ENCODE measurements at regions of chr2 and their contacts with region 1.

Region 1: GRCh38 chr2:230614913-230615332 is 97.7 kb upstream of the CAB39 start:
- DNase-seq: peak; percentile 82
- ATAC-seq: peak; percentile 89
- H3K4me3 Mint-ChIP-seq: no peak overlapping the region
- H3K27ac Mint-ChIP-seq: peak overlapping the region; percentile 69
- H3K4me1 Mint-ChIP-seq: peaks cover 35% of the 10 kb centered on the region
- H3K27me3 Mint-ChIP-seq: no peaks in the 10 kb centered on the region

Region 2: DNA sequence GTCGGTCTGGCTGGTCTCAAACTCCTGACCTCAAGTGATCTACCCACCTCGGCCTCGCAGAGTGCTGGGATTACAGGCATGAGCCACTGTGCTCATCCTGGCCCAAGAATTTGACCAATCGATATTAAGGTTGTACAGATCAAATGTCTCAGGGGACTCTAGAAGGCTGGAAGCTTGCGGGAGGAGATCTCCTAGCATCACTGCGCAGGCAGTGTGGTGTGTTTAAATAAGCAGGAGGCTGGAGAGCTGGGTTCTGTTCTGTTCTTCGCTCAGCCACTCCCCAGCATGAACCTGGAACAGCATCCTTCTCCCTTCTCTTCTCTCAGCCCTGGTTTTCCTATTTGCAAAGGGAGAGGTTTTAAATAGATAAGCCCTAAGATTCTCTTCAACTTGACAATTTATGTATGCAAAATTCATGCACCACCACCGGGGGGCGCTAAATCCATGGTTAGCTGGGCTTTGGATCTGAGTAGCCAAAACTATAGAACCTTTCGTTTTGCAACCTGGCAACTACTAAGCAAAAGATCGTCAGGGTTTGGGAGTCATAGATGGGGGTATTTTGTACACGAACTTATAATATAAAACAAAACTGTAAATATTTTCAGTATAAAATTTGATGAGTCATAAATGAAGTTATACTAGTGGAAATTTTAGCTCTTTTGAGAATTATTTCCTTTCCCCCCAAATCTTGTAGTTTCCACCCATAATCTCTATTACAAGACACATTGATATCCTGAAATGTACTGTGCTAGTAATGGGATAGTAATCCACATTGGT is 606.8 kb before region 1 on chr2:
- CTCF ChIA-PET with region 1: interaction called, 10 read pairs
- POLR2A ChIA-PET with region 1: no interaction called
- intact Hi-C with region 1: loop called (anchors 1 kb)
- DNase-seq: peak; percentile 92
- ATAC-seq: peak; percentile 69
- H3K4me3 Mint-ChIP-seq: no peak overlapping the region
- H3K27ac Mint-ChIP-seq: no peak overlapping the region
- H3K4me1 Mint-ChIP-seq: peaks cover 5% of the 10 kb centered on the region
- H3K27me3 Mint-ChIP-seq: no peaks in the 10 kb centered on the region

Region 3: GRCh38 chr2:230219419-230220331 is 395.2 kb before region 1 on chr2 and contains the start of gene SP110:
- CTCF ChIA-PET with region 1: no interaction called
- POLR2A ChIA-PET with region 1: no interaction called
- intact Hi-C with region 1: loop called (anchors 5 kb)
- DNase-seq: peak; percentile 89
- ATAC-seq: peak; percentile 91
- H3K4me3 Mint-ChIP-seq: peak within 1 kb of the TSS; percentile 88
- H3K27ac Mint-ChIP-seq: peak within 1 kb of the TSS; percentile 97
- H3K4me1 Mint-ChIP-seq: peaks cover 66% of the 10 kb centered on the region
- H3K27me3 Mint-ChIP-seq: no peaks in the 10 kb centered on the region
- total RNA-seq, gene SP110: 96.2 to 111 TPM

Region 4: GRCh38 chr2:230472621-230473018 is 142.3 kb before region 1 on chr2:
- CTCF ChIA-PET with region 1: no interaction called
- POLR2A ChIA-PET with region 1: no interaction called
- intact Hi-C with region 1: loop called (anchors 1 to 5 kb)
- DNase-seq: peak; percentile 77
- ATAC-seq: peak; percentile 95
- H3K4me3 Mint-ChIP-seq: peak overlapping the region; percentile 17
- H3K27ac Mint-ChIP-seq: peak overlapping the region; percentile 81
- H3K4me1 Mint-ChIP-seq: peaks cover 35% of the 10 kb centered on the region
- H3K27me3 Mint-ChIP-seq: no peaks in the 10 kb centered on the region

Region 5: DNA sequence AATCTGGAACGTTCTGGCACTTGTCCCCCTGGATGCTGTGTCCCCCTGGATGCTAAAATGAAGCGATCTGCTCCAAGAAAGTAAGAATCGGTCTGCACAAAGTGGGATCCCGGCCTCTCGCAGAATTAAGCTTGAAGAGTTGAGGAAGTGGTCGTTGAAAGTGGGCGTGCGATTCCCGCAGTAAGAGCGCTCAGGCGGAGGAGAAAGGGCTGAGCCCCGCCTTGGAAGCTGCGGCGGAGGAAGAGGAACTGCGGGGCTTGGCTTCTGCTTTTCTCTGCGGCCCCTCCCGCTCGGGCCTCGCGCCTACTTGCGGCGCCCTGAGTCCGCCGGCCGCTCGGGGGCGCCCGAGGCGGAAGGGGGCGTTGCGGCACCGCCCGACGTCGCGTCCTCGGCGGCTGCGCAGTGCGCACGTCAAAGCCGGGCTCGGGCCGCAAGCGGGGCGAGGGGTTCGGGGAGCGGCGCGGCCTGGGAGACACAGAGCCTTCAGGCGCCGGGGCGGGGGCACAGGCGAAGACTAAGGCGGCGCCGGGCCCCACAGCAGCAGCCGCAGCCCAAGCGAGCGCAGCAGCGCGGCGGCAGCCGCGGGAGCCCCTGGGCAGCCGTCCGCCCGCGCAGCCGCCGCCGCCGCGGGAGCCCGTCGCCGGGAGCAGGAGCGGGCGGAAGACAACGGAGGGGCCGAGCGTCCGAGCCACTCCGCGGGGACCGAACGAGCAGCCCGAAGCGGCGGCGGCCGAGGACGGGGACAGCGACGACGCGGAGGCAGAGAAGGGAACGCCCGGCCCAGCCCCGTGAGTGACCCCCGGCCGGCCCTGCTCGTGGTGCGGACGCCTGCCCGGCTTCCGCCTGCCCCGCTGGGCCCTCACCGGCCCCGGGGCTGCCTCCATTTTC is 97.8 kb after region 1 on chr2 and contains the start of gene CAB39:
- CTCF ChIA-PET with region 1: interaction called, 6 read pairs
- POLR2A ChIA-PET with region 1: no interaction called
- intact Hi-C with region 1: loop called (anchors 2 to 5 kb)
- DNase-seq: peak; percentile 93
- ATAC-seq: peak; percentile 83
- H3K4me3 Mint-ChIP-seq: peak within 1 kb of the TSS; percentile 94
- H3K27ac Mint-ChIP-seq: peak within 1 kb of the TSS; percentile 95
- H3K4me1 Mint-ChIP-seq: peaks cover 38% of the 10 kb centered on the region
- H3K27me3 Mint-ChIP-seq: no peaks in the 10 kb centered on the region
- total RNA-seq, gene CAB39: 122 to 148 TPM

Measured in activated CD4-positive, alpha-beta T cell treated with anti-CD3 and anti-CD28 coated beads for 36 hours (primary cell).